CD14-positive monocyte (primary cell): ENCODE measurements at regions of chr4 and their contacts with region 1.

Region 1: GRCh38 chr4:17576932-17577665 is at the start of gene LAP3:
- DNase-seq: peak; percentile 92 to 97 (median 96)
- H3K4me3 ChIP-seq: peak within 1 kb of the TSS; percentile 80 to 91 (median 88)
- H3K4me3 Mint-ChIP-seq: peak within 1 kb of the TSS; percentile 89 to 94
- H3K27ac ChIP-seq: peak within 1 kb of the TSS; percentile 85 to 91
- H3K27ac Mint-ChIP-seq: peak within 1 kb of the TSS; percentile 88 to 98 (median 97)
- H3K4me1 ChIP-seq: peaks cover 39 to 43% of the 10 kb centered on the region in 2 donors
- H3K4me1 Mint-ChIP-seq: peaks cover 41% of the 10 kb centered on the region
- H3K27me3 ChIP-seq: no peaks in the 10 kb centered on the region
- H3K27me3 Mint-ChIP-seq: peaks cover 0 to 3% (median 1%) of the 10 kb centered on the region in 3 donors
- CTCF ChIP-seq: no peak
- polyA plus RNA-seq, gene LAP3: 98.3 to 127 (median 108) TPM

Region 2: DNA sequence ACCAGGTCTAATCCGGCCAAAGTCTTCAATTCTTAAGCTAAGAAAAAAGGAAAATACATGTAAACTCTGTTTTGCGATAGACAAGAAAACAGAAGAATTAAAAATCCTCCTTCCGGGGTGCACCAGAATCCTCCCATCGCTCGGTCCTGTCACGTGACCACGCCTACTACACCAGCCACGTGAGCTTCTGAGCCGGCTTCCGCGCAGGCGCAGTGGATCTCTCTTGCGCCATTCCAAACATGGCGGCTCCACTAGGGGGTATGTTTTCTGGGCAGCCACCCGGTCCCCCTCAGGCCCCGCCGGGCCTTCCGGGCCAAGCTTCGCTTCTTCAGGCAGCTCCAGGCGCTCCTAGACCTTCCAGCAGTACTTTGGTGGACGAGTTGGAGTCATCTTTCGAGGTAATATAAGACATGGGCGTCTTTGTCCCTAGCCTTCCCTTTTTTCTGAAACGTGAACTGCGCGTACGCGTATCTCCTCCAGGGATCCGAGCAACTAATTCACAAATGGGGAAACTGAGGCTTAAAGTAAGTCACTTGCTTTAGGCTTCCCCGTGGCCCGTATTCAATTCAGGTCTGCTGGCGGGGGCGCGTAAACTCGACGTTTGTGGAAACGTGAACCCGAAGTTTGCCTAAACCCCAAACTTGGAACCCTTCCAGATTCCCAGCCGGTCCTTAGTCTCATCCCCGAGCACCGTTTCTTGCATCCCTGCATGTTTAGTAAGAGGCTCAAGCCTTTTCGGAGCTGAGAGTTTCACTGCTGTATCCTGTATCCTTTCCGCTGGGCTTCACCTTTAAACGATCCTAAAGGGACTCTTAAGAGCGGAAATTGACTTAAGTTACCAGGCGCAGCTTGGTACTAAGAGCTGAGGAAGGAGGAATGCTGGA is 37.6 kb after region 1 on chr4 and contains the start of gene MED28:
- intact Hi-C with region 1: loop called (anchors 2 kb)
- DNase-seq: peak; percentile 94 to 97 (median 95)
- H3K4me3 ChIP-seq: peak within 1 kb of the TSS; percentile 90 to 100 (median 98)
- H3K4me3 Mint-ChIP-seq: peak within 1 kb of the TSS; percentile 98 to 99
- H3K27ac ChIP-seq: peak within 1 kb of the TSS; percentile 75 to 98
- H3K27ac Mint-ChIP-seq: peak within 1 kb of the TSS; percentile 94 to 99 (median 97)
- H3K4me1 ChIP-seq: peaks cover 27 to 35% of the 10 kb centered on the region in 2 donors
- H3K4me1 Mint-ChIP-seq: peaks cover 33% of the 10 kb centered on the region
- H3K27me3 ChIP-seq: no peaks in the 10 kb centered on the region
- H3K27me3 Mint-ChIP-seq: peaks cover 0 to 2% (median 0%) of the 10 kb centered on the region in 3 donors
- CTCF ChIP-seq: no peak
- polyA plus RNA-seq, gene MED28: 8.6 to 46.4 (median 43.5) TPM

Region 3: DNA sequence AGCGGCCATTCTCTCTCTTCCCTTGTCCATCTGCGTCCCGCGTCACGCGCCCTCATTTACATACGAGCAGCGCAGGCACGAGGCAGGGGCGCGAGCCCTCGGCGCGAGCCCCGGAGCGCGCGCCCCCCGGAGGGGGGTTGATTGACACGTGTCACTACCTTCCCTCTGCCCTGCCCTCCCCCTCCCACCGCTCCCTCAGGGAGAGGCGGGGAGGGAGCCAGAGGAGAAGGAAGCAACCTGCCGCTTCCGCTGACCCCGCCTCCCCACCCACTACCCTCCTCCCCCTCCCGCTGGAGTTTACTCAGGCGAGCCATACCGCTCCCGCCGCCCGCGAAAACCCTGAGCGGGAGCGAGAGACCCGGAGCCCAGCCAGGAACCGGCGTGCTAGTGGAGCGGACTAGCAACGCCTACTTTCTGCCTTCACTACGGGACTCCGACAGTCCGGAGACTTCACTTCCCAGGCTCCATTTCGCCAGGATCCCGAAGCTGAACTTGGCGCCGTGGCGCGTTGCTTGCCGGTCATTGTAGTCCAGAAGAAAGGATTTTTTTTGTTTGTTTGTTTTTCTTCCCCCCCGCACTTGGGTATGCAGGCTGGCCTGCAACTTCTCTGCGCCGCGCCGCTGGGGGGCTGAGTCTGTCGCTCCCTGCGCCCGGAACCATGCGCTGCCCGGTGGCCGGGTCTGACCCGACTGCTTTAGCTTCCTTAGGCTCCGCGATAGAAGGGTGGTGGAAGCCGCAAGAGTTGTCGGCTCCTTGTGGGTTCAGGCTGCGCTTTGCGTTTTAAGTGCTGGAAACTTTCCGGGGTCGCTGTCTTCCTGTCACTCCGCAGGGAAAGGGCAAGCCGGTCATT is 444.8 kb after region 1 on chr4 and contains the start of gene LCORL:
- intact Hi-C with region 1: loop called in 1 of 2 experiments (anchors 5 kb)
- DNase-seq: peak; percentile 89 to 91 (median 90)
- H3K4me3 ChIP-seq: peak within 1 kb of the TSS; percentile 66 to 97 (median 69)
- H3K4me3 Mint-ChIP-seq: peak within 1 kb of the TSS; percentile 99 to 100
- H3K27ac ChIP-seq: peak within 1 kb of the TSS; percentile 91 to 92
- H3K27ac Mint-ChIP-seq: peak within 1 kb of the TSS; percentile 88 to 97 (median 93)
- H3K4me1 ChIP-seq: peaks cover 28 to 39% of the 10 kb centered on the region in 2 donors
- H3K4me1 Mint-ChIP-seq: peaks cover 39% of the 10 kb centered on the region
- H3K27me3 ChIP-seq: peaks cover 13 to 15% of the 10 kb centered on the region in 2 donors
- H3K27me3 Mint-ChIP-seq: peaks cover 4 to 19% (median 17%) of the 10 kb centered on the region in 3 donors
- CTCF ChIP-seq: no peak
- polyA plus RNA-seq, gene LCORL: 3.1 to 19.1 (median 9.6) TPM